AG04450 (cell line): ENCODE measurements at regions of chr17 and their contacts with region 1.

Region 1: GRCh38 chr17:16285957-16286640 is 67.2 kb downstream of the CENPV start:
- DNase-seq: peak; percentile 96
- H3K4me3 ChIP-seq: peak overlapping the region; percentile 46
- H3K27ac ChIP-seq: peak overlapping the region; percentile 100
- H3K27me3 ChIP-seq: no peaks in the 10 kb centered on the region
- CTCF ChIP-seq: peak; percentile 49

Region 2: DNA sequence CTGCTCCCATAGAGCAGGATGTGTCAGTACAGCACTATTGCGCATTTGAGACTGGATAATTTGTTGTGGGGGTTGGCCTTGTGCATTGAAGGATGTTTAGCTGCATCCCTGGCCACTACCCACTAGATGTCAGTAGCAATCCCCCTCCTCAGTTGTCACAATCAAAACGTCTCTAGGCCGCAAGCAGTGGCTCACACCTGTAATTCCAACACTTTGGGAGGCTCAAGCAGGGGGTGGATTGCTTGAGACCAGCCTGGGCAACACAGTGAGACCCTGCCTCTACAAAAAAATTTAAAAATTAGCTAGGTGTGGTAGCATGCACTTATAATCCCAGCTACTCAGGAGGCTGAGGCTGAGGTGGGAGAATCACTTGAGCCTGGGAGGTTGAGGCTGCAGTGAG is 18.7 kb after region 1 on chr17:
- CTCF ChIA-PET with region 1: interaction called, 18 read pairs
- POLR2A ChIA-PET with region 1: interaction called, 3 read pairs
- DNase-seq: no peak
- H3K4me3 ChIP-seq: no peak overlapping the region
- H3K27ac ChIP-seq: no peak overlapping the region
- H3K27me3 ChIP-seq: no peaks in the 10 kb centered on the region
- CTCF ChIP-seq: peak; percentile 72